Adrenal gland (tissue), 19 donors: ENCODE measurements at regions of chr9 and their contacts with region 1.

Region 1: DNA sequence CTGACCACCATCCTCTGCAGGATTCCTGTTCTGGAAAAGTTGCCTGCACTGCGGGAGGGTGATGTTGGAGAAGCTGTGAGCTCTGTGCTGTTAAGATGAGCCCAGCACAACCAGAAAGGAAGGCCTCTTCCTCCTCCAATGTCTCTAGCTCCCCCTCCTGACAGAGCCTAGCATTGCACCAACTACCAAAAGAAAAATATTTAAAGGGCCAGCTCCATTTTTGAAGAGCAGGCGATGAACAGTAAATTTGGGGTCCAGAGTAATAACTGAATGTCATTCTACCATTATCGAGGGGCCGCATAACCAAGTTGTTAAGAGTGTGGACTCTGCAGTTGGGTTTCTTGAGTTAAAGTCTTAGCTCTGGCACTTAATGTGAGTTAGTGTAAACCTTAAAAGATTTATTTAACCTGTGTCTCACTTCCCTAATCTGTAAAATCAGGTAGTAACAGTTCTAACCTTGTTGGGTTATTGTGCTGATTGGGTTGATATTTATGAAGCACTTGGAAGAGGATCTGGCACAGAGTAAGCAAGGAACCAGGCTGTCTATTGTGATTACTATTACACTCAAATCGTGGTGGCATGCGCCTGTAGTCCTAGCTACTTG is 3.9 kb downstream of the TEX53 start:
- DNase-seq: peak; percentile 79 to 91 (median 83)
- H3K4me3 ChIP-seq: no peak overlapping the region
- H3K27ac ChIP-seq: peak overlapping the region in 3 of 5 donors; percentile 66 to 78 (median 74)
- H3K4me1 ChIP-seq: peaks cover 0 to 11% of the 10 kb centered on the region in 2 donors
- H3K27me3 ChIP-seq: no peaks in the 10 kb centered on the region
- CTCF ChIP-seq: peak; percentile 76 to 95 (median 93)
- POLR2A ChIP-seq: no peak

Region 2: DNA sequence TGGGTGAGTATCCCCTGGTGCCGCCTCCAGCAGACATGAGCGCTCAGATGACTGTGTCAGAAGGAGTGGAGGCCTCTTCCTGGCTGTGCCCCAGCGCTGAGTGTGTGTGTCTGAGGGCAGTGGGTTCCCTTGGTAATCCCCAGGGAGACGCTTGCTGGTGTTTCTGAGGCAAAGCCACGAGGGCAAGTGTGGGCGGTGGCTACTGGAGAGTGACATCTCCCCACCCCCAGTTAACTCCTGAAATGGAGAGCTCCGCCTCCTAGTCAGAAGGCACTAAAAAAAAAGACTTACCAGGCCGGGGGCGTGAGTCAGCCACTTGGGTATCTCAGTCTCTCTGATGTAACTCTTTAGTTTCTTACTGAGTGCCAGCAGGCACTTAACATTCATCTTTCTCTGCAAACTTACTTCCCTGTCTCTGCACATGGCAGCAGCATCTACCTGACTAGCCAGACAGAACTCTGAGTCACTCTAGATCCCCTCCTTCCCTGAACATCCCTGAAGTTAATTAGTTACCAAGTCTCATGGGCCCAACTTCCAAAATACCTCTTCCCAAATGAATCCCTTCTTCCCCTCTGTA is 304.7 kb before region 1 on chr9:
- intact Hi-C with region 1: loop called (anchors 5 to 10 kb)
- DNase-seq: peak; percentile 84 to 96 (median 95)
- H3K4me3 ChIP-seq: no peak overlapping the region
- H3K27ac ChIP-seq: peak overlapping the region in 3 of 5 donors; percentile 63 to 85 (median 68)
- H3K4me1 ChIP-seq: peaks cover 6 to 7% of the 10 kb centered on the region in 2 donors
- H3K27me3 ChIP-seq: no peaks in the 10 kb centered on the region
- CTCF ChIP-seq: no peak
- POLR2A ChIP-seq: peak in 1 of 2 donors; percentile 16

Region 3: DNA sequence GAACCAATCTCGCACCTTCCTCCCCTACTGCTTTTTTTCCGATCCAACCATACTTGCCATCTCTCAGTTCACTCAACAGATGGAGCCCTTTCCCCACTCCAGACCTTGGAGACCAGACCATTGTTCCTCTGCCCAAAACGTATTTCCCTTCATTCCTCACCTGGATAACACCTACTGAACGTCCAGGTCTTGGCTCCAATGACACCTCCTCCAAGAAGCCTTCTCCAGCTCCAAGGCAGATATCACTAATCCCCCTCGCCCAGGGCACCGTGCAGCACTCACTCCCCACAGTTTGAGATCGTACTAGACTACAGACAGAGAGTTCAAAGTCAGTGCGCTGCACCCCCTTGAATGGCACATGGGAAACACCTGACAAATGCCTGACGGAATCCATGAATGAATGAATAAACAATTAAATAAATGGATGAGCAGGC is 218.8 kb before region 1 on chr9:
- intact Hi-C with region 1: loop called in 1 of 2 experiments (anchors 10 kb)
- DNase-seq: peak in 5 of 7 donors; percentile 26 to 57 (median 39)
- H3K4me3 ChIP-seq: no peak overlapping the region
- H3K27ac ChIP-seq: peak overlapping the region in 1 of 5 donors; percentile 22
- H3K4me1 ChIP-seq: peaks cover 10 to 40% of the 10 kb centered on the region in 2 donors
- H3K27me3 ChIP-seq: no peaks in the 10 kb centered on the region
- CTCF ChIP-seq: peak; percentile 28 to 84 (median 58)
- POLR2A ChIP-seq: no peak

Region 4: DNA sequence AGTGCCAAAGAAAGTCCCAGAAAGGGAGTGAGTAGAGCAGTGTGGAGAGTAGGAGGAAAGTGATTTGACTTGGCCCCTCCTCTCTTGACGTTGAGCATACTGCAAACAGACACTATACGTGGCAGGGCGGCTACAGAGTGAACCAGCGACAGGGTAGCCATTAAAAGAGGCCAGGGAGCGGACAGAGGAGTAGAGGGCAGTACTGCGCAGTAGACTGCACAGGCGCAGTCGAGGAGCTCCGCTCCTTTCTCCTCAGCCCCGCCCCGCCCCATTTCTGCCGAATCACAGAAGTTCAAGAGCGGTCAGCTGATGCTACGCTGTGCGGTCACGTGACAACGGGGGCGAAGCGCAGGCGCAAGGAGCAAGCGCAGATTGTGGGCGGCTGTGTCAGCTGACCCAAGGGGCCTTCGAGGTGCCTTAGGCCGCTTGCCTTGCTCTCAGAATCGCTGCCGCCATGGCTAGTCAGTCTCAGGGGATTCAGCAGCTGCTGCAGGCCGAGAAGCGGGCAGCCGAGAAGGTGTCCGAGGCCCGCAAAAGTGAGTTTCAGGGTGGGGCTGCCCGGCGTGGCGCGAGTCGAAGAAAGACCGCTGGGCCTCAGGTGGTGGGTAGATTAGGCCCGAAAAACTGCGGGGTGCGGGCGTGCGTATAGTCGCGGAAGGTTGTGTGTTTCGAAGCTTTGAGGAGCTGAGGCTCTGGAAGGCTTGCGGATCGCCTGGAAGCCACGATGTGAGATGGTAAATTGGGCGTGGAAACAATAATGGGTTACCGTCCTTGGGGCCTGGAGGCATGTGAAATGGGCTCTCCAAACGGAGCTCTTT is 66.1 kb before region 1 on chr9 and contains the start of gene ATP6V1G1:
- intact Hi-C with region 1: loop called in 1 of 2 experiments (anchors 10 kb)
- DNase-seq: peak; percentile 99 to 100 (median 100)
- H3K4me3 ChIP-seq: peak within 1 kb of the TSS; percentile 20 to 100 (median 82)
- H3K27ac ChIP-seq: peak within 1 kb of the TSS; percentile 57 to 98 (median 95)
- H3K4me1 ChIP-seq: peaks cover 33 to 41% of the 10 kb centered on the region in 2 donors
- H3K27me3 ChIP-seq: no peaks in the 10 kb centered on the region
- CTCF ChIP-seq: peak in 1 of 6 experiments; percentile 9
- POLR2A ChIP-seq: peak; percentile 85 to 97
- total RNA-seq, gene ATP6V1G1: 109 to 375 (median 174) TPM